Caco-2 (cell line): ENCODE measurements at regions of chr11 and their contacts with region 1.

Region 1: GRCh38 chr11:98260983-98261382 is 759.8 kb upstream of the CNTN5 start:
- DNase-seq: no peak
- H3K4me3 ChIP-seq: no peak overlapping the region
- H3K4me3 Mint-ChIP-seq: no peak overlapping the region
- H3K27ac Mint-ChIP-seq: no peak overlapping the region
- H3K4me1 ChIP-seq: no peaks in the 10 kb centered on the region
- H3K4me1 Mint-ChIP-seq: no peaks in the 10 kb centered on the region
- H3K27me3 ChIP-seq: no peaks in the 10 kb centered on the region
- H3K27me3 Mint-ChIP-seq: no peaks in the 10 kb centered on the region
- CTCF ChIP-seq: peak; percentile 34 to 57

Region 2: DNA sequence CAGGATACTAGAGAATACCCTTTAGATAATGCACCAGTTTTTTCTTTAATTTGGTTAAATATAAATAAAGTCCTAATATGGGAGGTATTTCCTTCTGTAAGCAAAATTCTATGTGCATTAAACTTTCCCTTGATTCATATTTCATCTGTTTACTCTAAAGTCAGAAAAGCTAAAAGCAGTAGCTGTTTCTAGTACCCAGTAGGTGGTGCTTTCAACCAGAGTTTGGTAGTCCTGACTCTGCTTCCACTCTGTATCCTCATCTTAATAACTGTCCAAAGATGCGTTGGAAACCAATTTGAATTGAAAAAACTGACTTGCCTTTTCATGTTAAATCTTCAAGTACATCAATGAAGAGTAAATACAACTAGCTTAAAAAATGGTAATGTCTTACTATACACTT is 806.0 kb before region 1 on chr11:
- CTCF ChIA-PET with region 1: no interaction called
- POLR2A ChIA-PET with region 1: no interaction called
- intact Hi-C with region 1: loop called (anchors 10 kb)
- DNase-seq: no peak
- H3K4me3 ChIP-seq: no peak overlapping the region
- H3K4me3 Mint-ChIP-seq: no peak overlapping the region
- H3K27ac Mint-ChIP-seq: no peak overlapping the region
- H3K4me1 ChIP-seq: no peaks in the 10 kb centered on the region
- H3K4me1 Mint-ChIP-seq: no peaks in the 10 kb centered on the region
- H3K27me3 ChIP-seq: no peaks in the 10 kb centered on the region
- H3K27me3 Mint-ChIP-seq: peaks cover 4% of the 10 kb centered on the region
- CTCF ChIP-seq: peak; percentile 41 to 60

Region 3: DNA sequence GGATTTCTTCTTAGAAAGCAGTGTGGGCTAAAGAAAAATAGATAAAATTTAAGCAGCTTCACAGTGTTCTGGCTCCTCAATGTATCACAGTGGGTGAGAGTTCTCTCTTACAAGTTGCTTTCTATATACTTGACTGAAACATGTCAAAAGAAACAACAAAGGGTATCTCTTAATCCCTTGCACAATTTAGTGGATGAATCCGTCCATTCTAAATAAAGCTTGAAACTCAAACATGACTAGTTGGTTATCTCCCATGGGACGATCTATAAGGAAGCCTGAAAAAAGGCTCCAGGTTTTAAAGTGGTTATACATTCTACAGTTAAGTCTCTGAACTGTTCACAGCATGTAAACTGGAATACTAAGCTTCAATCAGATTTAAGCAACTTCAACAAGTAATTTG is 233.3 kb before region 1 on chr11:
- CTCF ChIA-PET with region 1: no interaction called
- POLR2A ChIA-PET with region 1: no interaction called
- intact Hi-C with region 1: no loop called
- DNase-seq: no peak
- H3K4me3 ChIP-seq: no peak overlapping the region
- H3K4me3 Mint-ChIP-seq: no peak overlapping the region
- H3K27ac Mint-ChIP-seq: no peak overlapping the region
- H3K4me1 ChIP-seq: no peaks in the 10 kb centered on the region
- H3K4me1 Mint-ChIP-seq: no peaks in the 10 kb centered on the region
- H3K27me3 ChIP-seq: no peaks in the 10 kb centered on the region
- H3K27me3 Mint-ChIP-seq: no peaks in the 10 kb centered on the region
- CTCF ChIP-seq: no peak